Spleen (tissue), 13 donors: ENCODE measurements at regions of chr2 and their contacts with region 1.

Region 1: GRCh38 chr2:25664183-25664964 is 9.0 kb downstream of the DTNB start:
- DNase-seq: no peak
- H3K4me3 ChIP-seq: peak overlapping the region in 1 of 8 donors; percentile 10
- H3K27ac ChIP-seq: no peak overlapping the region
- H3K4me1 ChIP-seq: peaks cover 0 to 14% (median 4%) of the 10 kb centered on the region in 6 donors
- H3K27me3 ChIP-seq: no peaks in the 10 kb centered on the region
- CTCF ChIP-seq: peak; percentile 30 to 76 (median 67)
- POLR2A ChIP-seq: no peak

Region 2: GRCh38 chr2:25614686-25615085 is 49.7 kb before region 1 on chr2:
- intact Hi-C with region 1: loop called (anchors 5 kb)
- DNase-seq: no peak
- H3K4me3 ChIP-seq: no peak overlapping the region
- H3K27ac ChIP-seq: no peak overlapping the region
- H3K4me1 ChIP-seq: peaks cover 0 to 20% (median 10%) of the 10 kb centered on the region in 6 donors
- H3K27me3 ChIP-seq: no peaks in the 10 kb centered on the region
- CTCF ChIP-seq: no peak
- POLR2A ChIP-seq: no peak